ENCODE measurements at regions of chr20 and their contacts with region 1.

Region 1: GRCh38 chr20:36460648-36461599 is 80.4 kb upstream of the MYL9 start:
- DNase-seq: peak; percentile 97 to 98
- H3K4me3 ChIP-seq: peak overlapping the region; percentile 61
- H3K4me3 Mint-ChIP-seq: peak overlapping the region; percentile 98
- H3K27ac Mint-ChIP-seq: peak overlapping the region; percentile 86
- H3K4me1 ChIP-seq: peaks cover 49% of the 10 kb centered on the region
- H3K4me1 Mint-ChIP-seq: peaks cover 31% of the 10 kb centered on the region
- H3K27me3 ChIP-seq: no peaks in the 10 kb centered on the region
- H3K27me3 Mint-ChIP-seq: no peaks in the 10 kb centered on the region
- CTCF ChIP-seq: peak in 1 of 2 experiments; percentile 16

Region 2: GRCh38 chr20:36519944-36520343 is 59.0 kb after region 1 on chr20:
- CTCF ChIA-PET with region 1: no interaction called
- POLR2A ChIA-PET with region 1: no interaction called
- intact Hi-C with region 1: loop called (anchors 5 kb)
- DNase-seq: no peak
- H3K4me3 ChIP-seq: no peak overlapping the region
- H3K4me3 Mint-ChIP-seq: no peak overlapping the region
- H3K27ac Mint-ChIP-seq: no peak overlapping the region
- H3K4me1 ChIP-seq: no peaks in the 10 kb centered on the region
- H3K4me1 Mint-ChIP-seq: no peaks in the 10 kb centered on the region
- H3K27me3 ChIP-seq: no peaks in the 10 kb centered on the region
- H3K27me3 Mint-ChIP-seq: no peaks in the 10 kb centered on the region
- CTCF ChIP-seq: no peak

Region 3: DNA sequence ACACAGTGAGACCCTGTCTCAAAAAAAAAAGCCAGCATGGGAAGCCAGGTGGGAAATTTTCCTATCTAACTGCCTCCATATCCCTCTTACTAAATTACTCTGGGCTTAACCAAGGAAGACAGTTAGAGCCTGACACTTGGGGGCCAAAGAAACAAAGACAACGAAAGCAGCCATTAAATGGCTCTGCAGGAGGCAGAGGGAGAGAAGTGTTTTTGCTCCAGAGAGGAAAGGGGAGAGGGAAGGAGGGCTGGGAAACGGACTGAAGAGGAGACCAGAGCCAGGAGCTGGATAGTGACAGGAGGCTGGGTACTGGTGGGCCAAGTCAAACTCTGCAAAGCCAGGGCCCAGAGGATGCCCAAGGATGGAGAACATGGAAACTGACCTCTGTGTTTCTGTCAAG is 101.8 kb after region 1 on chr20:
- CTCF ChIA-PET with region 1: no interaction called
- POLR2A ChIA-PET with region 1: no interaction called
- intact Hi-C with region 1: no loop called
- DNase-seq: no peak
- H3K4me3 ChIP-seq: no peak overlapping the region
- H3K4me3 Mint-ChIP-seq: no peak overlapping the region
- H3K27ac Mint-ChIP-seq: no peak overlapping the region
- H3K4me1 ChIP-seq: peaks cover 8% of the 10 kb centered on the region; the same call in 1 of the 2 replicates
- H3K4me1 Mint-ChIP-seq: peaks cover 7% of the 10 kb centered on the region
- H3K27me3 ChIP-seq: no peaks in the 10 kb centered on the region
- H3K27me3 Mint-ChIP-seq: no peaks in the 10 kb centered on the region
- CTCF ChIP-seq: no peak

Measured in Caco-2 (cell line).